Activated CD4-positive, alpha-beta T cell treated with anti-CD3 and anti-CD28 coated beads, Interleukin-2, amount 10 ng/mL, durations not matched to agents 7 days and 5 days (primary cell): ENCODE measurements at regions of chr2 and their contacts with region 1.

Region 1: GRCh38 chr2:26503231-26503880 is 25.4 kb upstream of the OTOF start:
- DNase-seq: peak; percentile 85
- H3K4me3 Mint-ChIP-seq: peak overlapping the region; percentile 64
- H3K27ac Mint-ChIP-seq: peak overlapping the region; percentile 70
- H3K4me1 Mint-ChIP-seq: peaks cover 8% of the 10 kb centered on the region
- H3K27me3 Mint-ChIP-seq: peaks cover 5% of the 10 kb centered on the region

Region 2: DNA sequence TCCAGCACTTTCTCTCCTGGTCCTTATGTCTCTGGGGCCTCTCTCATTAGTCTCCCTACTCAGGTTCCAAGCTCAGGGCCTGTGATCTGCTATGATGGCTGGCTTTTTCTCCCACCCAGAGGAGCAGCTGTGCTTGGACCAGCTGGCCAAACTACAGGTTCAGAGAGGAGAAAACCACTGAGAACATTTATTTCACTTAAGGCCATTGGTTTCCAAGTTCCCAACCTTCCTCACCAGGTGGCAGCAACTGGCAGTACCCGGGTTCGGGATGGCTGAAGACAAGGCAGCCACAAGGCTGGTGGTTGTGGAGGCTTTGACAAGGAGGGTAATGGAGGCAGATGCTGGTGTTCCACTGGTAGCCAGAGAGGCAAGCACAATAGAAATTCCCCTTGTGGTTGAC is 187.3 kb before region 1 on chr2:
- CTCF ChIA-PET with region 1: no interaction called
- POLR2A ChIA-PET with region 1: no interaction called
- DNase-seq: no peak
- H3K4me3 Mint-ChIP-seq: no peak overlapping the region
- H3K27ac Mint-ChIP-seq: no peak overlapping the region
- H3K4me1 Mint-ChIP-seq: no peaks in the 10 kb centered on the region
- H3K27me3 Mint-ChIP-seq: peaks cover 2% of the 10 kb centered on the region

Region 3: GRCh38 chr2:26492749-26493515 is 10.4 kb before region 1 on chr2:
- CTCF ChIA-PET with region 1: interaction called, 10 read pairs
- POLR2A ChIA-PET with region 1: no interaction called
- DNase-seq: no peak
- H3K4me3 Mint-ChIP-seq: no peak overlapping the region
- H3K27ac Mint-ChIP-seq: peak overlapping the region; percentile 71
- H3K4me1 Mint-ChIP-seq: peaks cover 8% of the 10 kb centered on the region
- H3K27me3 Mint-ChIP-seq: peaks cover 3% of the 10 kb centered on the region

Region 4: DNA sequence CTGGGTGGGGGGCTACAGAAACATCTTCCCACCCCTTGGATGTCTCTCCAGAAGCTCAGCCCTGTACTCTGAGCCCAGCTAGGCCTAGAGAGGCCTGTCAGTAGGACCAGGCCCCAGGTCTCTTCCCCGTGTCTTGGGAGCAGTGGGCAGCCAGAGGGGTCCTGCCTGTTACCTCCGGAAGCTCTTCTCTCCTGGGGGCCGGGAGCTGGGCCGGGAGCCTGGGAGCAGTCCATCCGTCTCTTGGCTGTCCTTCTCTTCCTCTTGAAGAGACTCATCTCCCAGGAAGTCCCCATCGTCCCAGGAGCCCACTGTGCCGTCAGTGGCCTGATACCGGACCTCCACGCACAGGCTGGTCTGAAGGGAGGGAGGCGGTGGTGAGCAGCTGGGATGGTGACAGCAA is 12.9 kb after region 1 on chr2:
- CTCF ChIA-PET with region 1: interaction called, 12 read pairs
- POLR2A ChIA-PET with region 1: no interaction called
- DNase-seq: no peak
- H3K4me3 Mint-ChIP-seq: no peak overlapping the region
- H3K27ac Mint-ChIP-seq: no peak overlapping the region
- H3K4me1 Mint-ChIP-seq: peaks cover 12% of the 10 kb centered on the region
- H3K27me3 Mint-ChIP-seq: peaks cover 3% of the 10 kb centered on the region

Region 5: GRCh38 chr2:26612522-26613240 is 109.3 kb after region 1 on chr2:
- CTCF ChIA-PET with region 1: no interaction called
- POLR2A ChIA-PET with region 1: no interaction called
- DNase-seq: no peak
- H3K4me3 Mint-ChIP-seq: no peak overlapping the region
- H3K27ac Mint-ChIP-seq: no peak overlapping the region
- H3K4me1 Mint-ChIP-seq: peaks cover 17% of the 10 kb centered on the region
- H3K27me3 Mint-ChIP-seq: no peaks in the 10 kb centered on the region